A549 (cell line): ENCODE measurements at regions of chr12 and their contacts with region 1.

Region 1: GRCh38 chr12:62192903-62193250 is 67.3 kb upstream of the USP15 start:
- DNase-seq: no peak
- ATAC-seq: peak in 1 of 2 experiments; percentile 52; a peak in 3 of 6 replicates
- H3K4me3 ChIP-seq: peak overlapping the region; percentile 38; the same call in 2 of the 3 replicates
- H3K27ac ChIP-seq: peak overlapping the region; percentile 34 to 40; a peak in 2 of 6 replicates
- H3K4me1 ChIP-seq: peaks cover 10% of the 10 kb centered on the region; the same call in 2 of the 3 replicates
- CTCF ChIP-seq: peak; percentile 7; the same call in 1 of the 3 replicates
- EP300 ChIP-seq: no peak
- POLR2A ChIP-seq: no peak
- RAD21 ChIP-seq: no peak

Region 2: GRCh38 chr12:62210422-62210821 is 17.5 kb after region 1 on chr12:
- CTCF ChIA-PET with region 1: interaction called, 10 read pairs
- POLR2A ChIA-PET with region 1: no interaction called
- DNase-seq: peak; percentile 28 to 71
- ATAC-seq: peak; percentile 66 to 85; a peak in 4 of 6 replicates
- H3K4me3 ChIP-seq: no peak overlapping the region
- H3K27ac ChIP-seq: no peak overlapping the region
- H3K4me1 ChIP-seq: no peaks in the 10 kb centered on the region
- CTCF ChIP-seq: peak; percentile 52
- EP300 ChIP-seq: no peak
- POLR2A ChIP-seq: no peak
- RAD21 ChIP-seq: peak; percentile 33 to 62; a peak in 3 of 5 replicates

Region 3: DNA sequence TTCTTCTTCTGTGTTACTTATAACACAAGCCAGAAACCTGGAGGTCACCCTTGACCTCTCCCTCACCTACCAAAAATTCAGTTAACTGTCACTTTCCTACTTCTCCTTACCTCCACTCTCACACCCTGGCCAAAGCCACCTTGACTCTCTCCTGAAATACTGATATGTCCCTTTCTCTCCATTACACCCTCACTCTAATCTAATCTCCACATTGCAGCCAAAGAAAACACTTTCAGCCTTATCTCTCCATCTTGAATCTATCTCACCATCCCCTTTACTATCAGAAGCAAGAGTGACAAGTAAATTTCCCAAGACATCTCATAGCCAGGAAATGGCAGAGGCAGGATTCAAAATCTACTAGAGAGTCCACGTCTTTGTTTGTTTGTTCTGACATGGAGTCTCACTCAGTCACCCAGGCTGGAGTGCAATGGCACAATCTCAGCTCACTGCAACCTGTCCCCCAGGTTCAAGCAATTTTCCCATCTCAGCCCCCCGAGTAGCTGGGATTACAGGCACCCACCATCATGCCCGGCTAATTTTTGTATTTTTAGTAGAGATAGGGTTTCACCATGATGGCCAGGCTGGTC is 39.4 kb after region 1 on chr12:
- CTCF ChIA-PET with region 1: no interaction called
- POLR2A ChIA-PET with region 1: no interaction called
- DNase-seq: no peak
- ATAC-seq: no peak
- H3K4me3 ChIP-seq: no peak overlapping the region
- H3K27ac ChIP-seq: no peak overlapping the region
- H3K4me1 ChIP-seq: no peaks in the 10 kb centered on the region
- CTCF ChIP-seq: no peak
- EP300 ChIP-seq: no peak
- POLR2A ChIP-seq: no peak
- RAD21 ChIP-seq: no peak

Region 4: DNA sequence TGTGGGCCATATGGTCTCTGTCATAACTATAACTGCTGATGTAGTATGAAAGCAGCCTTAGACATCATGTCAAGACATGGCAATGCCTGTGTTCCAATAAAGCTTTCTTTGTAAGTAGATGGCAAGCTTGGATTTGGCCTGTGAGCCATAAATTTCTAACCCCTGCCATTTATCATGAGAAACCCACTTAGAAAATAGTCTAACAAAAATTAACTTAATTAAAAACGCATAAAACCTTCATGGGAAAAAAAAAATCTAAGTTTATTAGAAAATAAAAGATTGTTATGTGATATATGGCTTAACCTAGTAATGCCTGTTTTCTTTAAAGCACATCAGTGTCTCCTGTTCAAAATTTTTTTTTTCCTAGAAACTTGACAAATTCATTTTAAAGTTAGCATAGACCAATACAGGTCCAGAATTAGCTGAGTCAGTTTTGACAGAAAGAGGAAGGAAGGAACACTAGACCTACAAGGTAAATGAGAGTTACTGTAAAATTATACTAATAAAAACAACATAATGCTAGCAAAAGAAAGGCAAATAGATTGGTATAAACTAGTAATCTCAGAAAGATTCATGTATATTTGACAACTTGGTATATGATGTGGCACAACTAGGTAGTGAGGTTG is 135.5 kb after region 1 on chr12:
- CTCF ChIA-PET with region 1: no interaction called
- POLR2A ChIA-PET with region 1: no interaction called
- DNase-seq: no peak
- ATAC-seq: no peak
- H3K4me3 ChIP-seq: no peak overlapping the region
- H3K27ac ChIP-seq: no peak overlapping the region
- H3K4me1 ChIP-seq: no peaks in the 10 kb centered on the region
- CTCF ChIP-seq: no peak
- EP300 ChIP-seq: no peak
- POLR2A ChIP-seq: no peak
- RAD21 ChIP-seq: no peak